Naive thymus-derived CD4-positive, alpha-beta T cell (primary cell): ENCODE measurements at regions of chr16 and their contacts with region 1.

Region 1: GRCh38 chr16:30041846-30042267 is 10.8 kb upstream of the TLCD3B start:
- DNase-seq: peak in 3 of 9 donors; percentile 40 to 44 (median 42)
- ATAC-seq: no peak
- H3K4me3 ChIP-seq: no peak overlapping the region
- H3K4me3 Mint-ChIP-seq: no peak overlapping the region
- H3K27ac ChIP-seq: no peak overlapping the region
- H3K27ac Mint-ChIP-seq: no peak overlapping the region
- H3K4me1 ChIP-seq: no peaks in the 10 kb centered on the region
- H3K4me1 Mint-ChIP-seq: peaks cover 0 to 7% (median 0%) of the 10 kb centered on the region in 7 donors
- H3K27me3 ChIP-seq: no peaks in the 10 kb centered on the region
- H3K27me3 Mint-ChIP-seq: peaks cover 0 to 21% (median 0%) of the 10 kb centered on the region in 5 donors

Region 2: DNA sequence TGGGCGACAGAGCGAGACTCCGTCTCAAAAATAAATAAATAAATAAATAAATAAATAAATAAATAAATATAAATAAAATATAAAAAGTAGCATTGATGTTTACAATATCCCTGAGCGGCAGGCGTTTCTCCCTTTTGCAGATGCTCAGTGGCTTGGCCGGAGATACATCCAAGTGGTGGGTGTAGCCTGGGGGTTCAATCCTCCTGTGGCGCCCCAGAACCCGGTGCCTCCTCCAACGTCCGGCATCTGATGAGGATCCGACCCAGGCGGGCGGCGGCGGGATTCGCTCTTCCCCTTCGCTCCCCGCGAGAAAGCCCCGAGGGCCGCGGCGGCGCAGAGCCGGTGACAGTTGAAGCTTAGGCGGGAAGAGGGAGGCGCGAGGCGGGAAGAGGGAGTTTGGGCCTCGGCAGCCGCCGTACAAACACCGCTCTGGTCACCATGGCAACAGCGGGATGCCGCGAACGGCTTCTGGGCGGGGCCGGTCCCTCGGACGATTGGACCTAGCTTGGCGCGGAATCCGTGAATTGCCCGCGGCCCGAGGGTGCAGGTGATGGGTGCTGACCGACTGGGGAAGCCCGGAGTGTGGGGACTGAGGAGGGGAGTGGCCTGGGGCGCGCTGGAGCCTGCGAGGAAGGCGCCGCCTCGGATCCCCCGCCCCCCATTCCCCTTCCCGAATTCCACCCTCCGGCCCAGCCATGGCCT is 11.0 kb after region 1 on chr16:
- CTCF ChIA-PET with region 1: interaction called, 10 read pairs
- POLR2A ChIA-PET with region 1: interaction called, 4 read pairs
- intact Hi-C with region 1: loop called in 1 of 2 experiments (anchors 1 kb)
- DNase-seq: peak; percentile 70 to 96 (median 80)
- ATAC-seq: peak; percentile 87
- H3K4me3 ChIP-seq: peak overlapping the region; percentile 51
- H3K4me3 Mint-ChIP-seq: peak overlapping the region; percentile 82 to 90 (median 86)
- H3K27ac ChIP-seq: peak overlapping the region; percentile 51
- H3K27ac Mint-ChIP-seq: peak overlapping the region in 7 of 9 donors; percentile 58 to 86 (median 80)
- H3K4me1 ChIP-seq: peaks cover 4 to 5% of the 10 kb centered on the region in 2 donors
- H3K4me1 Mint-ChIP-seq: peaks cover 6 to 35% (median 24%) of the 10 kb centered on the region in 7 donors
- H3K27me3 ChIP-seq: no peaks in the 10 kb centered on the region
- H3K27me3 Mint-ChIP-seq: no peaks in the 10 kb centered on the region